ENCODE measurements at regions of chr18 and their contacts with region 1.

Region 1: GRCh38 chr18:62399781-62400308 is 74.7 kb downstream of the TNFRSF11A start:
- DNase-seq: no peak
- H3K4me3 Mint-ChIP-seq: no peak overlapping the region
- H3K27ac Mint-ChIP-seq: peak overlapping the region; percentile 20
- H3K4me1 Mint-ChIP-seq: peaks cover 60% of the 10 kb centered on the region
- H3K27me3 Mint-ChIP-seq: no peaks in the 10 kb centered on the region

Region 2: GRCh38 chr18:62346333-62347090 is 53.3 kb before region 1 on chr18:
- intact Hi-C with region 1: loop called (anchors 2 kb)
- DNase-seq: no peak
- H3K4me3 Mint-ChIP-seq: peak overlapping the region; percentile 61
- H3K27ac Mint-ChIP-seq: peak overlapping the region; percentile 90
- H3K4me1 Mint-ChIP-seq: peaks cover 61% of the 10 kb centered on the region
- H3K27me3 Mint-ChIP-seq: no peaks in the 10 kb centered on the region

Region 3: DNA sequence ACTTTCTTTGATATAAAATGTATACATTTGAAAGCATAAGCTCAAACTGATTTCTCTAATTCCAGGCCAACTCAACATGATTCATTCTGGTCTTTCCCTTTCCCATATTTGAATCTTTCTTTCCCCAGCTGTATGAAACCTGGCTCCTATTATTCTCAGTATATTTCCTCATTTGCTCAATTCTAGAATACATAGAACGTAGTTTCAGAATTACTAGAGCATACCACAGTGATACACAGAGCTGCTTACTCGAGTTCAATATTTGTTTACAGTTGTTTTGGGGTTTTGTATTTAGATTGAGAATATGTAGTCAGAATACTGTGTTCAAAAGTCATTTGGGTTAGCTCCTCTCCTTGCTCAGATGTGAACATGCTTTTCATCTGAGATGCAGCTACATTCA is 31.7 kb before region 1 on chr18:
- intact Hi-C with region 1: loop called (anchors 1 kb)
- DNase-seq: no peak
- H3K4me3 Mint-ChIP-seq: no peak overlapping the region
- H3K27ac Mint-ChIP-seq: peak overlapping the region; percentile 57
- H3K4me1 Mint-ChIP-seq: peaks cover 60% of the 10 kb centered on the region
- H3K27me3 Mint-ChIP-seq: no peaks in the 10 kb centered on the region

Region 4: GRCh38 chr18:62450546-62451406 is 50.9 kb after region 1 on chr18:
- intact Hi-C with region 1: loop called (anchors 2 kb)
- DNase-seq: no peak
- H3K4me3 Mint-ChIP-seq: no peak overlapping the region
- H3K27ac Mint-ChIP-seq: no peak overlapping the region
- H3K4me1 Mint-ChIP-seq: peaks cover 24% of the 10 kb centered on the region
- H3K27me3 Mint-ChIP-seq: no peaks in the 10 kb centered on the region

Measured in activated T-helper 2 cell treated with anti-CD3 and anti-CD28 coated beads, Interferon-gamma antibody, Interleukin-2, Interleukin-4, amounts not matched to agents 10 μg/mL and 5 μg/mL and 100 μg/mL, durations not matched to agents 14 hours and 24 hours and 36 hours (primary cell).